Gastrocnemius medialis (tissue), 4 donors: ENCODE measurements at regions of chr7 and their contacts with region 1.

Region 1: DNA sequence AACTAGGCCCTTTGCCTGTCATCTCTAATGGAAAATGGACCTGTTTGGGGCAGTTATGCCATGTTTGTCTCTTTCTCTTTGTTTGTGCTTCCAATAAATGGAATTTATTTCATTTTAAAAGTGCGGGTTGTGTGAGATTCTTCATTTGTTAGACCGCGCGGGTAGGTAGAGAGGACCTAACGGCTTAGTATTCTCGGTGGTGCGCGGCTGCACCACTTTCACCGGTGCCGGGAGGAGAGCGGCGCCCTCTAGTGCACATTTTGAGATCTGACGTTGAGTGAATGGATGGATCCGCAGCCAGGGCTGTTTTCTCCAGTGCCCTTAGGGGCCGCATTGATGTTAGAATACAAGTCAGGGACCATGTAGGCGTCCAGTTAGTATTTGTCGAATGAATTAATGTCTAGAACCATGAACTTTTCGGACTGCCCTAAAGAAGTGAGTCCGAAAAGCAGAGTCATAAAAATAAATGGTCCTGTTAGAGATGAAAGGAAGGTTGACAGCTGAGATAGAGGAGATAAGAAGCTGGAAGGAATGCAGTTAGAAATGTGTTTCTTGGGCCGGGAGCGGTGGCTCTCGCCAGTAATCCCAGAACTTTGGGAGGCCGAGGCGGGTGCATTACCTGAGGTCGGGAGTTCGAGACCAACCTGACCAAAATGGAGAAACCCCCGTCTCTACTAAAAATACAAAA is 29.3 kb upstream of the GIMAP8 start:
- DNase-seq: peak; percentile 57 to 65
- ATAC-seq: peak; percentile 97 to 99
- H3K4me3 ChIP-seq: peak overlapping the region in 1 of 4 donors; percentile 32
- H3K27ac ChIP-seq: no peak overlapping the region
- H3K4me1 ChIP-seq: no peaks in the 10 kb centered on the region
- H3K27me3 ChIP-seq: no peaks in the 10 kb centered on the region
- CTCF ChIP-seq: peak; percentile 66 to 94 (median 77)
- POLR2A ChIP-seq: no peak

Region 2: GRCh38 chr7:150404805-150405583 is 16.1 kb before region 1 on chr7:
- in situ Hi-C with region 1: no loop called
- intact Hi-C with region 1: loop called (anchors 2 kb)
- DNase-seq: peak; percentile 73 to 83
- ATAC-seq: peak; percentile 85
- H3K4me3 ChIP-seq: peak overlapping the region; percentile 69 to 83 (median 74)
- H3K27ac ChIP-seq: peak overlapping the region; percentile 94 to 97 (median 96)
- H3K4me1 ChIP-seq: peaks cover 5 to 9% of the 10 kb centered on the region in 2 donors
- H3K27me3 ChIP-seq: no peaks in the 10 kb centered on the region
- CTCF ChIP-seq: peak in 1 of 5 experiments; percentile 42
- POLR2A ChIP-seq: peak; percentile 62 to 73